CD4-positive, alpha-beta T cell (primary cell): ENCODE measurements at regions of chr3 and their contacts with region 1.

Region 1: DNA sequence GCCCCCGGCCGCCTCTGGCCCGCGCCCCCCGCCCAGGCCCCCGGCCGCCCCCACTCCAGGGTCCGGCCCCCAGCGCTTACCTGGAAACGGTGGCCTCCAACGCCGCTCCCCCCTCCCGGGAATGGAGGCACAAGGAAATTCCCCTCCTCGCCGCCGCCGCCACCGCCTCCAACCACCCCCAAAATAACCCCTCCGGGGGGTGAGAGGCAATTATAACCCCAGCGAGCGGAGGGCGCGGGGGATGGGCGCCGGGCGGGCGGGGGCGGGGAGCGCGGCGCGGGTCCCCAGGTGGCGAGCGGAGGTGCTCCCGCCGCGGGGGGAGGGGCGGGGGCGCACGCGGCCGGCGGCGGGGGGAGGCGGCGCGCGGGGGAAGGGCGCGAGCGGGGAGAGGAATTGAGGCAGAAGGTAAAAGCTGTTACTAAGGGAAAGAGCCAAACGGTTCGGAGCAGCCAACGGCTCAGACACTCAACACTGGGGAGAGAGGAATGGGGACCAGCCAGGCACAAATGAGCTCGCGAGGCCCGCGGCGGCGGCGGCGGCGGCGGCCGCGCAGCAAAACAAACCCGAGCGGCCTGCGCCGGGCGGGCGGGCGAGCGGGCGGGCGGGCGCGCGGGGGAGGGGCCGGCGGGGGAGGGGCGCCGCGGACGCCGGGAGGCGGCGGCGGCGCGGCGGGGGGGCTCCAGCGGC is at the start of gene TBL1XR1:
- DNase-seq: peak; percentile 79 to 95 (median 87)
- ATAC-seq: peak; percentile 45
- H3K4me3 ChIP-seq: peak within 1 kb of the TSS; percentile 95
- H3K4me3 Mint-ChIP-seq: peak within 1 kb of the TSS; percentile 97
- H3K27ac ChIP-seq: peak within 1 kb of the TSS; percentile 82 to 98
- H3K27ac Mint-ChIP-seq: peak within 1 kb of the TSS; percentile 87
- H3K4me1 ChIP-seq: peaks cover 54% of the 10 kb centered on the region
- H3K4me1 Mint-ChIP-seq: peaks cover 59% of the 10 kb centered on the region
- H3K27me3 ChIP-seq: no peaks in the 10 kb centered on the region
- H3K27me3 Mint-ChIP-seq: no peaks in the 10 kb centered on the region
- CTCF ChIP-seq: no peak
- total RNA-seq, gene TBL1XR1: 63.2 to 67.8 TPM

Region 2: GRCh38 chr3:177057768-177058167 is 139.4 kb before region 1 on chr3:
- CTCF ChIA-PET with region 1: interaction called, 3 read pairs
- POLR2A ChIA-PET with region 1: interaction called, 73 read pairs
- intact Hi-C with region 1: loop called in 1 of 2 experiments (anchors 1 kb)
- DNase-seq: peak in 12 of 14 experiments; percentile 3 to 67 (median 22)
- ATAC-seq: peak; percentile 97
- H3K4me3 ChIP-seq: no peak overlapping the region
- H3K4me3 Mint-ChIP-seq: no peak overlapping the region
- H3K27ac ChIP-seq: no peak overlapping the region
- H3K27ac Mint-ChIP-seq: no peak overlapping the region
- H3K4me1 ChIP-seq: peaks cover 5% of the 10 kb centered on the region
- H3K4me1 Mint-ChIP-seq: peaks cover 36% of the 10 kb centered on the region
- H3K27me3 ChIP-seq: no peaks in the 10 kb centered on the region
- H3K27me3 Mint-ChIP-seq: no peaks in the 10 kb centered on the region
- CTCF ChIP-seq: no peak

Region 3: DNA sequence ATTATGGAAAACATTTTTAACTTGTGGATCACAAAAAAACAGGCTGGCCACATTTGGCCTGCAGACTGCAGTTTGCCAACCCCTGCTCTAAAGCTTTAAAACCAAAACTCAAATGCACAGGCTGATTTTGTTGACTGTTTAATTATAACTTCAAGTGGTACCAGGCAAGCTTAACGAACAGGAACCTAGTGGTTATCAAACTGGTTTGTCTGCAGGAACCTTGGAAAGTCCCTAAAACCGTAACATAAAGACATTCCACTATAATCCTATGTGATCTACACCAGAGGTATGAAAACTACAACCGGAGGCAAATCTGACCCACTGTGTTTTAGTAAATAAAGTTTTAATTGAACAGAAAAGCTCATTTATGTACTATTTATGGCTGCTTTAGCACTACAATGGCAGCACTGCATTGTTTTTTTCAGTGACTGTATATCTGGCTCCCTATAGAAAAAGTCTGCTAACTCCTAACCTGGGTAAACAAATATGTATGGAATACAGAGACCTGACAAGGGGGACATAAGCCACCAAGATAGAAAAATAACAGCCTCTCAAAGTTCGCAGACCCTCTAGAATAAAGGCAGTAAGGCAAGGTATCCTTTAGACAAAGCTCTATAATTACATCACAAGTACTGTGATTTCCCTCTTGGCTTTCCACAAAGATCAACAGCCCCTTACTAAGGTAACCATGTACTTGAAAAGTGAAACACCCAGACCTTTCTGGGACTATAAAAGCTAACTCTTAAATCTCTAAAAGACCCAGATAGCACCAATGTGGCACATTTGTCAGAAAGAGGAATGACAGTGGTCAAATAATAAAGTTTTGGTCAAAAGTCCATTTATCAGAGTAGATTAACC is 52.0 kb before region 1 on chr3:
- CTCF ChIA-PET with region 1: interaction called, 5 read pairs
- POLR2A ChIA-PET with region 1: interaction called, 32 read pairs
- intact Hi-C with region 1: loop called in 1 of 2 experiments (anchors 1 kb)
- DNase-seq: peak in 3 of 14 experiments; percentile 70 to 81 (median 79)
- ATAC-seq: peak; percentile 81
- H3K4me3 ChIP-seq: peak overlapping the region; percentile 8
- H3K4me3 Mint-ChIP-seq: peak overlapping the region; percentile 65
- H3K27ac ChIP-seq: peak overlapping the region; percentile 39 to 53
- H3K27ac Mint-ChIP-seq: peak overlapping the region; percentile 90
- H3K4me1 ChIP-seq: peaks cover 46% of the 10 kb centered on the region
- H3K4me1 Mint-ChIP-seq: peaks cover 83% of the 10 kb centered on the region
- H3K27me3 ChIP-seq: no peaks in the 10 kb centered on the region
- H3K27me3 Mint-ChIP-seq: no peaks in the 10 kb centered on the region
- CTCF ChIP-seq: no peak

Region 4: DNA sequence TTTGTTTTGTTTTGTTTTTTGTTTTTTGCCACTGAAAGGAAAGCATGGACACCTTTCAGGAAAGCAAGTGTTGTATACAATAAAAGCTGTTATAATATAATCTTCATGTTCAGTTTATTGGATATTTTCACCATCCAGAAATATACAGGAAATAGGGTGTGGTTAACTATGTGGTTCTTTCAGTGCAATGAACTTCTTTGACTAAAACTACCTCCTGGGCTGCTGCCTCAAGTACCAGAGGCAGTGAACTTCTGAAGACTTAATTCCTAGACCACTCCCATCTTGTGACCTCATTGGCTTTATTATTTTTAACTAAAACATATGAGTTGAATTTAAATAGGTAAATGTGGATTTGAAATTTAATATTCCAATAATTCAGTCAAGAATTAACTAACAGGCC is 27.2 kb after region 1 on chr3:
- CTCF ChIA-PET with region 1: no interaction called
- POLR2A ChIA-PET with region 1: interaction called, 10 read pairs
- intact Hi-C with region 1: loop called in 1 of 2 experiments (anchors 1 kb)
- DNase-seq: peak in 4 of 14 experiments; percentile 17 to 40 (median 25)
- ATAC-seq: peak; percentile 79
- H3K4me3 ChIP-seq: no peak overlapping the region
- H3K4me3 Mint-ChIP-seq: no peak overlapping the region
- H3K27ac ChIP-seq: no peak overlapping the region
- H3K27ac Mint-ChIP-seq: peak overlapping the region; percentile 72
- H3K4me1 ChIP-seq: peaks cover 22% of the 10 kb centered on the region
- H3K4me1 Mint-ChIP-seq: peaks cover 47% of the 10 kb centered on the region
- H3K27me3 ChIP-seq: no peaks in the 10 kb centered on the region
- H3K27me3 Mint-ChIP-seq: no peaks in the 10 kb centered on the region
- CTCF ChIP-seq: no peak

Region 5: DNA sequence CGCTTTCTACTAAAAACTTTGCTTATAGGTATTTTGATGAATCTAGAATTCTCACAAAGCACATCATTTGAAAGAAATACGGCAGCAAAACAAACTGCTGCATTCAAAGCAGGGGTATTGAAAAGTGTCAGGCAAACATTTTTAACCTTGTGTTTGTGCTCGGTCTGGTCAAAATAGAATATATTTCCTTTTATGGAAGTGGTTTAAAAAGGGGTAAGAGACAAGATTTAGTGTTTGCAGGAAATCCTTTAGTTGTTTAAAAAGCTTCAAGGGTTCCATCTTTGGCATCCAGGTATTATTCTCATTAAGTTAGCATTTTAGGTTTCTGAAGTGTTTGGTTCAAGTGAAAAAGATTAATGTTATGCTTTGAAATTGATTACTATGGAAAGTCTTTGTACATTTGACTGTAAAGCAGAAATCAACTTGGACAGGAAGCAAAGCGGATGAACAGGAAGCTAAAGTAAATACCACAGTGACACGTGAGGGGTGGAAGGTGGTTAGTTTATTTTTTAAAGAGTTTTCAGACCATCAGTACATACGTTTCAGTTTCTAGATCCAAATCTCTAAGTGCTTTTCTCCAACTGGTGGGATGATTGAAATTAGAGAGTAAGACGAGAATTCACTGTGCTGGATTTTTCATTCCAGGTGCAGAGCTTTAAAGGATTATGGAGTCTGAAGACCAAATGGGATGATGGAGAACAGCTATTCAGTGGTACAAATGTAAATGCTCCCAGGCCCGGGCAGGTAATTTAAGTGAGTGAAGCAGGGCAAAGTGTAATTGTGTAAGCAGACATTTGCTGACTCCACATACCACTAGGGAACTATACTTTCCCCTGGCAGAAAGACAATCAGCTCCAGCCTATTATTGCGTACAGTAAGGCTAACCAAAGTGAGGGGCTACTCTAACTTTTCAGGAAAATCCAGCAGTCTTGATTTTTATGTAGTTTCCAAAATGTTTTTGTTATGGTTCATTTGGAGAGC is 341.9 kb after region 1 on chr3:
- CTCF ChIA-PET with region 1: no interaction called
- POLR2A ChIA-PET with region 1: interaction called, 14 read pairs
- intact Hi-C with region 1: no loop called
- DNase-seq: peak in 4 of 14 experiments; percentile 20 to 79 (median 55)
- ATAC-seq: peak; percentile 59
- H3K4me3 ChIP-seq: peak overlapping the region; percentile 19
- H3K4me3 Mint-ChIP-seq: peak overlapping the region; percentile 74
- H3K27ac ChIP-seq: peak overlapping the region; percentile 19 to 31
- H3K27ac Mint-ChIP-seq: peak overlapping the region; percentile 83
- H3K4me1 ChIP-seq: peaks cover 27% of the 10 kb centered on the region
- H3K4me1 Mint-ChIP-seq: peaks cover 65% of the 10 kb centered on the region
- H3K27me3 ChIP-seq: no peaks in the 10 kb centered on the region
- H3K27me3 Mint-ChIP-seq: no peaks in the 10 kb centered on the region
- CTCF ChIP-seq: no peak